ENCODE measurements at regions of chr12 and their contacts with region 1.

Region 1: DNA sequence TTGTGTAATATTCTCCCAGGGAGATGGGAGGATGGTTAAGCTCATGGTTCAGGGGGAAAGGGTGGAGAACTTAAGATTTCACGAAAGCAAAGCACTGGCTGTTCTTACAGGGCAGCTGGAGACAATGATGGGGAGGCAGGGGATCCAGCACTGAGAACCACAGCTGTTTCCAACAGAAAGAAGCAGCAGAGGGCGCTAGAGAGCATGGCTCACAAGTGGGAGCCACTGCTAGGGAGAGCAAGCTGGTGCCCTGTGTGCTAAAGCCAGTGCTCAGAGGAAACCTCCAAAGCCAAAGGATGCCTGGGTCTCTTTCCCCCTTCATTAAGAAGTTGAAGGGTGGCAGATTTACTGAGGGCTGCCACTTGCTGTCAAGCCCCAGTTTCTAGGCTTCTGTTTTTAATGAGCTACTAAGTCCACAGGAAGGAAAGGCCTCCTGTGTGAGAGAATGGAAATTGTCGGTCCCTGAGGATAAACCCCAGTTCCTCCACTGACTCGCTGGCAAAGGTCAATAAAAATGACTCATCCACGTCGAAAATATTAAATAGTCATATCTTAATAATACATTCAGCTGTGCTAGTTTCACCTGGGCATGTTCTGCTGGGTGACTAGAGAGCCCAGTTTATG is 199.7 kb downstream of the ANO2 start:
- H3K4me3 ChIP-seq: no peak overlapping the region
- H3K27ac ChIP-seq: no peak overlapping the region
- H3K4me1 ChIP-seq: no peaks in the 10 kb centered on the region
- CTCF ChIP-seq: peak; percentile 46

Region 2: DNA sequence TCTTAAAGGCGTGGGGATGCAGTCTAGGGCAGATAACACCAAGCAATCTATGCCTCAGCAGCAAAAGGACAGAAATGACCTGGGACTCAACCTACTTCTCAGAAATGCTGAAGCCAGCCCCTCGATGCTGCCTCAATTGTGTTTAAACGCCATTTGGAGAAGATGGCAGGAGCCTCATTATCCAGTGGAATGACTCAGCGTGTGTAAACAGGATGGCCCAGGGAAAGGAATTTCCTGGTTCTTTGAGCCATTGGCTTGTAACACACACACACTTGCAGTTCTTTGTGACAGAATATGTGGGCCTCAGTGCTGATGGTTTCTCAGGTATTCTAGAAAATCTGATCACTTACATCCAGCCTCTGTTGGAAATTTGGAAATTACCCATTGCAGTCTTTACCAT is 159.2 kb before region 1 on chr12:
- CTCF ChIA-PET with region 1: no interaction called
- POLR2A ChIA-PET with region 1: no interaction called
- H3K4me3 ChIP-seq: no peak overlapping the region
- H3K27ac ChIP-seq: no peak overlapping the region
- H3K4me1 ChIP-seq: no peaks in the 10 kb centered on the region
- CTCF ChIP-seq: no peak

Region 3: GRCh38 chr12:5713599-5714081 is 31.7 kb before region 1 on chr12:
- CTCF ChIA-PET with region 1: no interaction called
- POLR2A ChIA-PET with region 1: no interaction called
- H3K4me3 ChIP-seq: no peak overlapping the region
- H3K27ac ChIP-seq: no peak overlapping the region
- H3K4me1 ChIP-seq: no peaks in the 10 kb centered on the region
- CTCF ChIP-seq: no peak

Region 4: DNA sequence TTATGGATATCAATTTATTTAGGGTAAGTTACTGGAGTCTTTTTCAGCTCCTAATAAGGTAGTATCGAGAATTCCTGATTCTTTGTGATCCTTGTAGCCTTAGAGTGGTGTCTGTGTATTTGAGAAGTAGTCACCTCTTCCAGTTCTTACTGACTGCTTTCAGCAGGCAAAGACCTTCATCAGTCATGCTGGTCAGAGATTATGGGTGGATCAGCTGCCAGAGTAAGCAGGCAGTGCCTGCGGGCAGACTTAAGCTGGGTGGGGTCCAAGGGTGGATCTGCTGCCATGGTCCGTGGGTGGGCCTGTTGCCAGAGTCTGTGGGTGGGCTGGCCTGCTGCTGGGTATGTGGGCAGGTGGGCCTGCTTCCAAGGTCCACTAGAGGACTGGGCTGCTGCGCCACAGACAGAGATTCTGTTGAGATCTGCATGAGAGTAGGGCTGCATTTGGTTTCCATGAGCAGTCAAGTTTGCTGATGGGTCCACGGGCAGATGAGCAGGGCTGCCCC is 11.0 kb after region 1 on chr12:
- CTCF ChIA-PET with region 1: interaction called, 22 read pairs
- POLR2A ChIA-PET with region 1: no interaction called
- H3K4me3 ChIP-seq: no peak overlapping the region
- H3K27ac ChIP-seq: no peak overlapping the region
- H3K4me1 ChIP-seq: no peaks in the 10 kb centered on the region
- CTCF ChIP-seq: no peak

Region 5: DNA sequence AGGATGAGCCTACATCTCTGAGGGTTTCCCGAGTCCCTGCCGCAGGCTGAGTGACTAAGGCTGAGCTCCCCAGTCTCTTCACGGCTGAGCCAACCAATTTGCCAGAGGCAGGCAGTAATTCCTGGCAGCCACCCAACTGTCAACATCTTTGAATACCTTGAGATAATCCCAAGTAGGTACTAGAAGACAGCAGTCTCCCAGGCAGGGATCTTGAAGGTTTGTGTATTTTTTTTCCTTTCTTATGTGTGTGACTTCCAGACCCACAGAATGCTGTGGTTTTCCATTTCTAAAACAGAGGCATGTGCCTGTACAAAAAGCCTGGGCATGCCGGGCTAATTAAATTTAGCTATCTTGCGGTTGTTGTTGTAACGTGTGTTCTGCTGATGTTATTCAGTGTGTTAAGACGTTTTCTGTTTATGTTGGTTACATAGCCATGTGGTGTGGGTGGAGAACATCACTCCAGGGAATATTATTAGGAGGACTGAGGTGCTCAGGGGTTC is 44.1 kb after region 1 on chr12:
- CTCF ChIA-PET with region 1: interaction called, 29 read pairs
- POLR2A ChIA-PET with region 1: no interaction called
- H3K4me3 ChIP-seq: no peak overlapping the region
- H3K27ac ChIP-seq: no peak overlapping the region
- H3K4me1 ChIP-seq: peaks cover 13% of the 10 kb centered on the region
- CTCF ChIP-seq: no peak

Region 6: GRCh38 chr12:5872735-5873134 is 127.4 kb after region 1 on chr12:
- CTCF ChIA-PET with region 1: interaction called, 13 read pairs
- POLR2A ChIA-PET with region 1: no interaction called
- H3K4me3 ChIP-seq: no peak overlapping the region
- H3K27ac ChIP-seq: no peak overlapping the region
- H3K4me1 ChIP-seq: no peaks in the 10 kb centered on the region
- CTCF ChIP-seq: no peak

Region 7: DNA sequence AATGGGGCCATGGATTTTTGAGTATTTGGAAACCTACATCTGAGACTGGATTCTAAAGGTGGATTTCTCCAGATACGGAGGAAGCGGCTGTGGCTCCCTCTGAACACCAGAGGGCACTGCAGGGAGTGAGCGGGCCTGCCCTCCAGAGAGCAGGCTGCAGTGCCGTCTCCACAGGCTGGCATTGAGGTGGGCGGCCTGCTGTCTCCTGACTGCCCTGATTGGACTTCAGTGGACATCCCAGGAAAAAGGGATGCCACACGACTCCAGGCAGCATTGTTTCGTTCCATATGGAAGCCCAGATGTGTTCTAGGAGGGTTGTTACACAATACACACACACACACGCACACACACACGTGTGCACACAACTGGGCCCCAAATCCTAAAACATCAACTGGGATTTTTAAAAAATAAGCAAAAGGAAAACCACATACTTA is 220.6 kb after region 1 on chr12:
- CTCF ChIA-PET with region 1: no interaction called
- POLR2A ChIA-PET with region 1: no interaction called
- H3K4me3 ChIP-seq: no peak overlapping the region
- H3K27ac ChIP-seq: no peak overlapping the region
- H3K4me1 ChIP-seq: no peaks in the 10 kb centered on the region
- CTCF ChIP-seq: peak; percentile 64; the same call in 1 of the 2 replicates